Heart left ventricle (tissue), 16 donors: ENCODE measurements at regions of chr1 and their contacts with region 1.

Region 1: DNA sequence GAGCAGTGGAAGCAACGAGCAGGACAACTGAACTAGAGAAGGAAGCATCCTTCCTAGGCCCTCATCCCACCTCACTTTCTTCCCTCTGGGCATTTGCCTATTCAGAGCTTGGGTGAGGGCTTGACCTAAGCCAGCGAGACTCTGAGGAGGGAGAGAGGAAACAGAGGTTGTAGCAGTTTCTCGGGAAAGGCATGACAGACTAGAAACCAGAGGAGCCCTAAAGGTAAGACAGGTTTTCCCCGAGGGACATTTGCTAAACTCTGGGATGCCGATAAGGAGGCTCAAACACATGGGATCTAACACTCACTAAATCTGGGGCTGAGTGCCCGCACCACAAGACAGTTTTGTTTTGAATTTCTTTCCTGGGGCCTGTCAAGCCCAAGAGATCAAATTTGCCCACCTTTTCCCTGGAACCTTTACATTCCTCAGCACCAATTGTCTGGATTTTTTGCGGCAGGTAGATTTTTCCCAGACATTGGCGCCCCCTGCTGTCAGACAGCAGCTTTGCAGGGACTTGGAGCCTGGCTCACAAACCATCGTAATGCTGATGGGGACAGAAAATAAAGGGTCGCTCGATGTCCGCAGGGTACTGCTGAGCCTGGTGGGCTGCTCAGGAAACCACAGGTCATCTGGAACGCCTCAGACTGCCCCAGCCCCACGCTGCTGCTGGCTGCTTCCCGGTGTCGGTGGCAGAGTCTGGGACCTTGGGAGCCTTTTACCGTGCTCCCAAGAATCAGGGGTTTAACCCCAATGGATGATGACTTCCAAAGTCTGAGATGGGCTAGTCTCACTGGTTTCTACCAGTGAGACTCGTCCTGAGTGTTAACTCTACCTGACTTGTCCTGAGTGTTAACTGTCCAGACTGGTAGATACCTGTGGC is 23.4 kb upstream of the TSPAN2 start:
- DNase-seq: peak in 2 of 5 donors; percentile 33 to 38
- ATAC-seq: peak in 2 of 4 donors; percentile 29 to 36
- H3K4me3 ChIP-seq: no peak overlapping the region
- H3K27ac ChIP-seq: no peak overlapping the region
- H3K4me1 ChIP-seq: peaks cover 0 to 15% (median 0%) of the 10 kb centered on the region in 12 donors
- H3K27me3 ChIP-seq: no peaks in the 10 kb centered on the region
- CTCF ChIP-seq: peak; percentile 87 to 95 (median 92)
- POLR2A ChIP-seq: no peak

Region 2: GRCh38 chr1:114861384-114861783 is 251.4 kb before region 1 on chr1:
- intact Hi-C with region 1: no loop called
- DNase-seq: no peak
- ATAC-seq: no peak
- H3K4me3 ChIP-seq: no peak overlapping the region
- H3K27ac ChIP-seq: no peak overlapping the region
- H3K4me1 ChIP-seq: no peaks in the 10 kb centered on the region
- H3K27me3 ChIP-seq: peaks cover 0 to 33% (median 9%) of the 10 kb centered on the region in 9 donors
- CTCF ChIP-seq: no peak
- POLR2A ChIP-seq: no peak

Region 3: GRCh38 chr1:114979278-114979891 is 133.4 kb before region 1 on chr1:
- intact Hi-C with region 1: loop called (anchors 1 to 2 kb)
- DNase-seq: peak in 4 of 5 donors; percentile 25 to 39 (median 38)
- ATAC-seq: peak in 1 of 4 donors; percentile 51
- H3K4me3 ChIP-seq: no peak overlapping the region
- H3K27ac ChIP-seq: no peak overlapping the region
- H3K4me1 ChIP-seq: no peaks in the 10 kb centered on the region
- H3K27me3 ChIP-seq: peaks cover 0 to 10% (median 0%) of the 10 kb centered on the region in 9 donors
- CTCF ChIP-seq: peak; percentile 73 to 90 (median 80)
- POLR2A ChIP-seq: no peak